ENCODE measurements at regions of chr11 and their contacts with region 1.

Region 1: DNA sequence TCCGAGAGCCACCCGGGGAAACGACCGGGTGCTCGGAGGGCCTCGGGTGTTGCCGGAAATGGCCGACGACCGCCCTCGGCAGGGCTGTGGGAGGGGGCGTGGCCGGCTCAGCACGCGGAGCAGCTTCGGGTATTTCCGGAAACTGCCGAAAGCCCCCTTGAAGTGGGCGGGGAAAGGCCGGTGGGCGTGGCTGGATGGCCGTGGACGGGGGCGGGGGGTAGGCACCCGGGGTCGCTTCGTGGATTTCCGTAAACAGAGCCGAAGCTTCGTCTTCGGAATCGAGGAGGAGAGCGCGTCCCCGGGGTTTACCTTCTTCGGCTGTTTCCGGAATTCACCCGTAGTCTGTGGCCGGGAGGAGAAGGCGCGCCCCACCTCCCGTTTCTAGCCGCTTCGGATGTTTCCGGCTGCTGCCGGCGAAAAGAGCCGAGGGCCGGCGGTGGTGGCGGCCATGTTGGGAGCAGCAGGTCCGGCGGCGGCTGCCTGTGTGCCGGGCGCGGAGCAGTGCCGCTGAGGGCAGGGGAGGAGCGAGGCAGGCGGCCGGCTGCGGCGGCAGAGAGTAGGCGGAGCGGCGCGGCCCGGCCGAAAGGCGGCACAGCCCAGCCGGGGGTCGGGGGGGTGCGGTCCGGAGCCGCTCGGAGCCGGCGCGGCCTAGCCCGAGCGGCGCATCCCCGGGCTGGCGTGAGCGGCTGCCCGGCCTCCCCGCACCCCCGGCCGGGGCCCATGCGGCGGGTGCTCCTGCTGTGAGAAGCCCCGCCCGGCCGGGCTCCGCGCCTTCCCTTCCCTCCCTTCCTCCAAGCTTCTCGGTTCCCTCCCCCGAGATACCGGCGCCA is at the start of gene MARK2:
- DNase-seq: peak; percentile 100
- ATAC-seq: peak; percentile 84
- H3K4me3 Mint-ChIP-seq: peak within 1 kb of the TSS; percentile 95
- H3K27ac Mint-ChIP-seq: peak within 1 kb of the TSS; percentile 89
- H3K4me1 Mint-ChIP-seq: peaks cover 62% of the 10 kb centered on the region
- H3K27me3 Mint-ChIP-seq: no peaks in the 10 kb centered on the region
- CTCF ChIP-seq: no peak
- total RNA-seq, gene MARK2: 39.2 and 41.5 TPM in 2 replicates

Region 2: DNA sequence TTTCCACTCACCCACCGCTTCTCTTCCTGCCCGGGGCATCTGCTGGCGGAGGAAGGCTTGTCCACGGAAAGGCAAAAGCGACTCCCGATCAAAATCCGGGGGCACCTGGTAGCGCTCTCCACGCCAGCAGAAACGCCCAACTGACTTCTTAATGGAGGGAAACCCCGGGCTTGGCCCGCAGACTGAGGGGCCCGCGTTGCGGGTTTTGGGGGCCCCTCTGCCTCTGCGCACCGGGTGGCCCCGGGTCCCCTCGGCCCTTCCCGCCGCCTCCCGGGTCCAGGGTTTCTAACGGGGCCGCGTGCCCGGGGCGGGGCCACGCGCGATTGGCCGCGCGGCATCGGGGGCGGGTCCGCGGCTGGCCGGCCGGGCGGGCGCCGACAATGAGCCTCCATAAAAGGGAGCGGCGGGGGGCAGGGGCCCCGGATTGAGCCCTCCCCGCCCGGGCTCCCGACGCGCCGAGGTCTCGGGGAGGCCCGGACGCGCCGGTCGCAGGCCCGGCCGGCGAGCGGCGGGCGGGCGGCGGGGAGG is 25.8 kb before region 1 on chr11 and contains the start of gene SPINDOC:
- CTCF ChIA-PET with region 1: interaction called, 8 read pairs
- POLR2A ChIA-PET with region 1: interaction called, 7 read pairs
- intact Hi-C with region 1: loop called (anchors 2 kb)
- DNase-seq: peak; percentile 77
- ATAC-seq: peak; percentile 94
- H3K4me3 Mint-ChIP-seq: peak within 1 kb of the TSS; percentile 85
- H3K27ac Mint-ChIP-seq: no peak within 1 kb of the TSS
- H3K4me1 Mint-ChIP-seq: peaks cover 21% of the 10 kb centered on the region
- H3K27me3 Mint-ChIP-seq: no peaks in the 10 kb centered on the region
- CTCF ChIP-seq: no peak
- total RNA-seq, gene SPINDOC: 18.7 and 20.8 TPM in 2 replicates

Region 3: DNA sequence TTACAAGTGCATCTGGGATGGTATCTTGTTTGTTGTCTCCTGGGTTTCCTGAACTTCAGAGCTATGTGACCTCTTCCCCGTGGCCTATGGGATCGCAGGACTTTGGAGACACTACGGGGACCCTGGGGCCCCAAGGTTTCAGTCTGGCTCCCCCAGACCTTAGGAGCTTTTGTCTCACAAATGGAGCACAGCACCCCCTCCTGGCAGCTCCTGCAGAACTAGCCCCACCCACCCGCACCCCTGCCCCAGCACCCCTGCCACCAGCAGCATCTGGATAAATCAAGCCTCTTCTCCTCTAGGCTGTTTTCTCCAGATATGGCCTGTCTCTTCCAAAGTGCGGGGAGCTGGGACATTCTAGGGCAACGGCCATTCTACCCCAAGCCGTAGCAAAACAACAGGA is 67.7 kb after region 1 on chr11:
- CTCF ChIA-PET with region 1: interaction called, 17 read pairs
- POLR2A ChIA-PET with region 1: no interaction called
- intact Hi-C with region 1: loop called (anchors 1 kb)
- DNase-seq: no peak
- ATAC-seq: peak; percentile 40
- H3K4me3 Mint-ChIP-seq: no peak overlapping the region
- H3K27ac Mint-ChIP-seq: no peak overlapping the region
- H3K4me1 Mint-ChIP-seq: no peaks in the 10 kb centered on the region
- H3K27me3 Mint-ChIP-seq: no peaks in the 10 kb centered on the region
- CTCF ChIP-seq: no peak

Region 4: DNA sequence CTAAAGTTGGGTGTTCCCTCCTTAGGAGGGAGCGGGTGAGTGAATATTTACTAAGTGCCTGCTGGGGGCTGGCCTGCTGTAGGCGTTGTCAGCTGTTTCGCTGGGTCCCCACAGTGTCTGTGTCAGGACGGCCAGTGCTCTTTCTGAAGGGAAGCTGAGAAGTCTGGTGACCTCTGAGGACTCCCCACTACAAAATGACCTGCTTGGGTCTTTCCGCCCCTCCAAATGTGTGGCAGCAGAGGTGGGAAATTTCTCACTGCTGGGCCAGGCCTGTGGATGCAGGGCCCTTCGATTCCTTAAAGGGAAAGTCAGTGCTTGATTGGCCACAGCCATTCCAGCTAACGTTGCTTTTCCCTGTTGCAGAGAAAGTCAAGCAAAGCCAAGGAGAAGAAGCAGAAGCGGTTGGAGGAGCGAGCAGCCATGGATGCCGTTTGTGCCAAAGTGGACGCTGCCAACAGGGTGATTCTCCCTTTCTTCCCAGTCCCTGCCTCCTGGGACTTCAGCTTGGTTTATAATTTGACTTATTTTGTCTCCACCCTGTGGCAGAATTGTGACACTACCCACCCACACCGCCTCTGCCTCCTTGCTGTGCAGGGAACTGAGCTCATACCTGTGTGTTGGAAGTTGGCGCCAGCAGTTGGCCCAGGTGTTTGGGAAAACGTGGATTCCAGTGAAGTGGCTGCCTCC is 106.7 kb after region 1 on chr11:
- CTCF ChIA-PET with region 1: interaction called, 130 read pairs
- POLR2A ChIA-PET with region 1: interaction called, 17 read pairs
- intact Hi-C with region 1: loop called (anchors 1 kb)
- DNase-seq: no peak
- ATAC-seq: peak; percentile 79
- H3K4me3 Mint-ChIP-seq: no peak overlapping the region
- H3K27ac Mint-ChIP-seq: no peak overlapping the region
- H3K4me1 Mint-ChIP-seq: peaks cover 23% of the 10 kb centered on the region
- H3K27me3 Mint-ChIP-seq: no peaks in the 10 kb centered on the region
- CTCF ChIP-seq: no peak

Region 5: DNA sequence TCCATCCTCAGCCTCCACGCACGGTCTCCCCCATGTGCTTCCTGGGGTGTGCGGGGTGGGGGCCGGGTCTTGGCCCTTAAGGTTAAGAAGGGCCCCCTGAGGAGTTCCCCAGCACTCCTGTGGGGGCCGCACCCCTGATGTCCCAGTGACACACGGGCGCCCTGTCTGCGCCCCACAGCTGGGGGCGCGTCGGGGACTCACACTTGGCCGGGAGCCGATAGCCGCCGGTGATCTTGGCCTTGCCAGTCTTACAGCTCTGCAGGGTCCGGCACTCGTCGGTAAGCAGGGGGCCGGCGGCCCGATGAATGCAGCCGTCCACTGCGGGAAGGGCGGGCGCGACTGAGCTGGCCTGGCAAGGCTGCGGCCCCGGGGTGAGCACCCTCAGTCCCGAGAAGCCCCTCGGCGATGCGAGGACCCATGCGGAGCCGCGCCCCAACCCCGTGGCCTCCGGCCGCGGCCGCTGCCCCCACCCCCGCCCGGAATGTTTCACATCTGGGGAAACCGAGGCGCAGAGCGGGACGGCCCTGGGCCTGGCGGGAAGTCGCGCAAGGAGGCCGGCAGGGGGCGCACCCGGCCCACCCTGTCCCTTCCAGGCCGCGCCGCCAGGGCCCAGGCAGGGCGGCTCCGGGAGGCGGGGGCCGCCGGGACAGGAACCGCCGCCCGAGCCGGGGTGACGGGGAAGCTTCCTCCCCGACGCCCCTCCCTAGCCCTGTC is 161.3 kb after region 1 on chr11:
- CTCF ChIA-PET with region 1: interaction called, 17 read pairs
- POLR2A ChIA-PET with region 1: interaction called, 3 read pairs
- intact Hi-C with region 1: no loop called
- DNase-seq: peak; percentile 72
- ATAC-seq: peak; percentile 75
- H3K4me3 Mint-ChIP-seq: peak overlapping the region; percentile 56
- H3K27ac Mint-ChIP-seq: no peak overlapping the region
- H3K4me1 Mint-ChIP-seq: peaks cover 9% of the 10 kb centered on the region
- H3K27me3 Mint-ChIP-seq: peaks cover 2% of the 10 kb centered on the region
- CTCF ChIP-seq: no peak

Region 6: GRCh38 chr11:64304316-64305072 is 465.6 kb after region 1 on chr11:
- CTCF ChIA-PET with region 1: interaction called, 4 read pairs
- POLR2A ChIA-PET with region 1: no interaction called
- intact Hi-C with region 1: loop called (anchors 2 kb)
- DNase-seq: peak; percentile 84
- ATAC-seq: peak; percentile 13
- H3K4me3 Mint-ChIP-seq: peak overlapping the region; percentile 87
- H3K27ac Mint-ChIP-seq: peak overlapping the region; percentile 89
- H3K4me1 Mint-ChIP-seq: peaks cover 34% of the 10 kb centered on the region
- H3K27me3 Mint-ChIP-seq: peaks cover 11% of the 10 kb centered on the region
- CTCF ChIP-seq: peak; percentile 22